Activated T-helper 1 cell treated with anti-CD3 and anti-CD28 coated beads, Interleukin-12 subunit alpha, Interleukin-12 subunit beta, Interleukin-2, Interleukin-4 antibody, amounts not matched to agents 30 ng/mL and 10 ng/mL and 1 ng/mL, durations not matched to agents 14 hours and 24 hours and 36 hours (primary cell): ENCODE measurements at regions of chr1 and their contacts with region 1.

Region 1: GRCh38 chr1:157150631-157151030 is 12.4 kb upstream of the ETV3 start:
- DNase-seq: no peak
- H3K4me3 Mint-ChIP-seq: no peak overlapping the region
- H3K27ac Mint-ChIP-seq: peak overlapping the region; percentile 27
- H3K4me1 Mint-ChIP-seq: peaks cover 61% of the 10 kb centered on the region
- H3K27me3 Mint-ChIP-seq: peaks cover 7% of the 10 kb centered on the region

Region 2: DNA sequence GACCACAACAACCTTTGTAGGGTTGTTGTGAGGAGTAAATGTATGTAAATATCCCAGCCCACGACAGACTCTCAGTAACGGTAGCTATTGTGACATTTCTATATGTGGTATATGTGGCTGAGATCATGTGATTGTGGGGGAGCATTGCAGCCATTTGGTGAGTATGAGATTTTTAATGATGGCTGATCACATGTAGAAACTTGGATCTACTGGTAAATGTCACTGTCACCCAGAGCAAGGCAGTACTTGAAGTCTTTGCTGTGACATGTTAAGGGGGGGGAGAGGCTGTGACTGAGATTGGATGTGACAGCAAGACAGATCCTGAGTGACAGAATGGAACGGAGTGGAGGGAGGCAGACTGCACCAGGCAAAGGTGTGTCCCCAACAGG is 626.2 kb before region 1 on chr1:
- intact Hi-C with region 1: no loop called
- DNase-seq: no peak
- H3K4me3 Mint-ChIP-seq: peak overlapping the region; percentile 40
- H3K27ac Mint-ChIP-seq: peak overlapping the region; percentile 82
- H3K4me1 Mint-ChIP-seq: peaks cover 32% of the 10 kb centered on the region
- H3K27me3 Mint-ChIP-seq: no peaks in the 10 kb centered on the region

Region 3: GRCh38 chr1:157090196-157090647 is 60.4 kb before region 1 on chr1:
- intact Hi-C with region 1: no loop called
- DNase-seq: peak; percentile 70
- H3K4me3 Mint-ChIP-seq: no peak overlapping the region
- H3K27ac Mint-ChIP-seq: no peak overlapping the region
- H3K4me1 Mint-ChIP-seq: peaks cover 6% of the 10 kb centered on the region
- H3K27me3 Mint-ChIP-seq: peaks cover 6% of the 10 kb centered on the region

Region 4: GRCh38 chr1:157133426-157133825 is 17.2 kb before region 1 on chr1:
- intact Hi-C with region 1: loop called (anchors 2 kb)
- DNase-seq: peak; percentile 41
- H3K4me3 Mint-ChIP-seq: peak overlapping the region; percentile 64
- H3K27ac Mint-ChIP-seq: peak overlapping the region; percentile 76
- H3K4me1 Mint-ChIP-seq: peaks cover 68% of the 10 kb centered on the region
- H3K27me3 Mint-ChIP-seq: no peaks in the 10 kb centered on the region

Region 5: GRCh38 chr1:157163273-157164127 is 12.9 kb after region 1 on chr1:
- intact Hi-C with region 1: no loop called
- DNase-seq: peak; percentile 54
- H3K4me3 Mint-ChIP-seq: no peak overlapping the region
- H3K27ac Mint-ChIP-seq: no peak overlapping the region
- H3K4me1 Mint-ChIP-seq: peaks cover 6% of the 10 kb centered on the region
- H3K27me3 Mint-ChIP-seq: peaks cover 26% of the 10 kb centered on the region

Region 6: DNA sequence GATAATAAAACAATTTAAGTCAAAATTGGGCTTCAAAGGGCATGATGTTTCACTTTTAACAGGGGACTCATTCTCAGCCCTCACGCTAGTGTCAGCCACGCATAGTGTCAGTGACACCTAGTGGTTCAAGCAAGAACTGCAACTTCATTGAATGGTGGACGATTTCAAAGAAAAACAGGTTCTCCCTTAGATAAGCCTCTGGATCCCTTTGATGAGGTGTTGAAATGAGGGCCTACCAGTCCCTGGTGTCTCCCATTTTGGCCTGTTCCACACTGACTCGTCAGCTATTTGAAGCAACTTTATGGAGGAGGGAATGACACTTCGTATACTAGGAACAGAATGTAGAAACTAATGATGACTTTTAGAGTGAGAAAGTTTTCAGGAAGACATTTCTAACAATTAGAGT is 345.5 kb after region 1 on chr1:
- intact Hi-C with region 1: no loop called
- DNase-seq: peak; percentile 31
- H3K4me3 Mint-ChIP-seq: no peak overlapping the region
- H3K27ac Mint-ChIP-seq: no peak overlapping the region
- H3K4me1 Mint-ChIP-seq: no peaks in the 10 kb centered on the region
- H3K27me3 Mint-ChIP-seq: peaks cover 13% of the 10 kb centered on the region